Activated T-helper 1 cell treated with anti-CD3 and anti-CD28 coated beads, Interleukin-12 subunit alpha, Interleukin-12 subunit beta, Interleukin-2, Interleukin-4 antibody, amounts not matched to agents 30 ng/mL and 10 ng/mL and 1 ng/mL, durations not matched to agents 14 hours and 24 hours and 36 hours (primary cell): ENCODE measurements at regions of chr1 and their contacts with region 1.

Region 1: DNA sequence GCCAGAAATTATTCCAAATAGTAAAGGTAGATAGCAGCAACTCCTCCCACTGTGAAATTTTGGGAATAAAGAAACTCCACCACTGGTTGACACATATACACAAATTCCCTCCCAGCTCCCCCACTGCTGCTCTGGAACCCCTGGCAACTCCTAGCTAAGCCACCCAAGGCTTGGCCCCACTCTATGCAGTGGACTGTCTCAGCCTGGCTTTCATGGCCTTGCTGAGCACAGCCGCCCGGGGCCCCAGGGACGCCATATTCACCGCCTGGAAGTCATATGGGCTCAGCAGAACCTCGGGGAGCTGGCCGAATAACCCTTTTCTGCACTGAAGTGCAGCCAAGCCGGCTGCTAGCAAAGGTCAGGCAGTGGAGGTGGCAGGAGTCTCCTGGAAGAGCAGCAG is 15.4 kb upstream of the RBM34 start:
- DNase-seq: no peak
- H3K4me3 Mint-ChIP-seq: no peak overlapping the region
- H3K27ac Mint-ChIP-seq: no peak overlapping the region
- H3K4me1 Mint-ChIP-seq: peaks cover 3% of the 10 kb centered on the region
- H3K27me3 Mint-ChIP-seq: no peaks in the 10 kb centered on the region

Region 2: GRCh38 chr1:235136111-235136510 is 40.4 kb before region 1 on chr1:
- intact Hi-C with region 1: loop called (anchors 5 kb)
- DNase-seq: no peak
- H3K4me3 Mint-ChIP-seq: no peak overlapping the region
- H3K27ac Mint-ChIP-seq: no peak overlapping the region
- H3K4me1 Mint-ChIP-seq: peaks cover 14% of the 10 kb centered on the region
- H3K27me3 Mint-ChIP-seq: no peaks in the 10 kb centered on the region